B cell (primary cell): ENCODE measurements at regions of chr13 and their contacts with region 1.

Region 1: DNA sequence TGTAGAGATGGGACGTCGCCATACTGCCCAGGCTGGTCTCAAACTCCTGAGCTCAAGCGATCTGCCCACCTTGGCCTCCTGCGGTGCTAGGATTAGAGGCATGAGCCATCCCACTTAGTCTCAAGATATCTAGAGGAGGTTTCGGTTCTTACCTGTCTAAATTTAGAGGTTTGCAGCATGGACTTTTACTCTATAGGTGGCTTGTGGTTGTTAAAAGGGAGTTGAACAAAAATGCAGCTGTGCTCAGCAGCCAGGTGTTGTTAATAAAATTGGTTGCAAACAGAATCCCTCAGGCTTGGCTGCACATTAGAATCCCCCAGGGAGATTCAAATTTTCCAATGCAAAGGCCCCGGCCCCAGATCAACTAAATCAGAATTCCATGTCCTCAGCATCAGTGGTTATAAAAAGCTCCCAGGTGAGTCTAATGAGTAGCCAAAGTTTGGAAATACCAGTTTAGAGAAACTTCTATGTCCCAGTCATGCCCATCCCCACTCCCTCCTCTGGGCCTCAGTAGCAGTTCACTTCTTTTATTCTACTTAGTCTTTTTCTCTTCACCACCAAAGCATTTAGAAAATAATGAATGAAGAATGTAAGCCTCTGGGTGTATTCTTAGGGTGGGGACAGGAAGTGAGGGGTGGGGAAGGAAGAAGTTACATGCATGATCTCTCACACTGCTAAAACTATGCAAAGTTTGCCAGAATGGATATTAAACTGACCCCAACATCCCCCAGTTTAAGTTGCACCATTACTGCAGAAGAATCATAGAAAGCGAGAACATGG is 471.0 kb downstream of the COG6 start:
- DNase-seq: peak; percentile 50
- ATAC-seq: peak; percentile 32
- H3K4me3 ChIP-seq: peak overlapping the region in 3 of 5 experiments; percentile 16 to 53 (median 18)
- H3K4me3 Mint-ChIP-seq: peak overlapping the region; percentile 59
- H3K27ac ChIP-seq: peak overlapping the region; percentile 52 to 69
- H3K27ac Mint-ChIP-seq: peak overlapping the region; percentile 51
- H3K4me1 ChIP-seq: peaks cover 46 to 47% of the 10 kb centered on the region in 2 donors
- H3K4me1 Mint-ChIP-seq: peaks cover 51% of the 10 kb centered on the region
- H3K27me3 ChIP-seq: no peaks in the 10 kb centered on the region
- H3K27me3 Mint-ChIP-seq: no peaks in the 10 kb centered on the region
- CTCF ChIP-seq: no peak

Region 2: DNA sequence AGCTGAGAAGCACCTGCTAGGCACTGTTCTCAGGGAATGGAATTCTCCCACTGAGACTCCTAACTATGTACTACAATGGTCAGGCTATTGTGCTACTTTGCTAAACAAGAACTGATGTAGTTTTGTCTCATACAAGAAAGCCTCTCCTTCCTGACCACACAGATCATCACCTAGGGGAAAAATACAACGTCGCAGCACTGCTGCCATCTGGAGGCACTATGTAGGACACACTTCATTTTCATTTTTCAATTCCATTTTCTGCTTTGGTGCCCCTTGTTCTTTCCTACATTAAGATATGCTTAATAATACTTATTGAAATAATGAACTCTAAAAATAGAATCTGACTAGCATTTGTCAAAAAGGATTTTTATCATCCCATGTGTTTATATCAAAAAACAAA is 1109.7 kb before region 1 on chr13:
- CTCF ChIA-PET with region 1: no interaction called
- POLR2A ChIA-PET with region 1: no interaction called
- intact Hi-C with region 1: no loop called
- DNase-seq: peak; percentile 14
- ATAC-seq: no peak
- H3K4me3 ChIP-seq: no peak overlapping the region
- H3K4me3 Mint-ChIP-seq: no peak overlapping the region
- H3K27ac ChIP-seq: no peak overlapping the region
- H3K27ac Mint-ChIP-seq: no peak overlapping the region
- H3K4me1 ChIP-seq: no peaks in the 10 kb centered on the region
- H3K4me1 Mint-ChIP-seq: no peaks in the 10 kb centered on the region
- H3K27me3 ChIP-seq: no peaks in the 10 kb centered on the region
- H3K27me3 Mint-ChIP-seq: no peaks in the 10 kb centered on the region
- CTCF ChIP-seq: peak; percentile 49

Region 3: GRCh38 chr13:39132286-39133230 is 993.9 kb before region 1 on chr13:
- CTCF ChIA-PET with region 1: no interaction called
- POLR2A ChIA-PET with region 1: no interaction called
- intact Hi-C with region 1: no loop called
- DNase-seq: no peak
- ATAC-seq: no peak
- H3K4me3 ChIP-seq: no peak overlapping the region
- H3K4me3 Mint-ChIP-seq: no peak overlapping the region
- H3K27ac ChIP-seq: no peak overlapping the region
- H3K27ac Mint-ChIP-seq: no peak overlapping the region
- H3K4me1 ChIP-seq: no peaks in the 10 kb centered on the region
- H3K4me1 Mint-ChIP-seq: no peaks in the 10 kb centered on the region
- H3K27me3 ChIP-seq: peaks cover 0 to 3% (median 0%) of the 10 kb centered on the region in 4 experiments
- H3K27me3 Mint-ChIP-seq: peaks cover 15% of the 10 kb centered on the region
- CTCF ChIP-seq: no peak

Region 4: GRCh38 chr13:39385621-39386231 is 740.8 kb before region 1 on chr13:
- CTCF ChIA-PET with region 1: no interaction called
- POLR2A ChIA-PET with region 1: no interaction called
- intact Hi-C with region 1: no loop called
- DNase-seq: no peak
- ATAC-seq: no peak
- H3K4me3 ChIP-seq: no peak overlapping the region
- H3K4me3 Mint-ChIP-seq: no peak overlapping the region
- H3K27ac ChIP-seq: no peak overlapping the region
- H3K27ac Mint-ChIP-seq: no peak overlapping the region
- H3K4me1 ChIP-seq: no peaks in the 10 kb centered on the region
- H3K4me1 Mint-ChIP-seq: no peaks in the 10 kb centered on the region
- H3K27me3 ChIP-seq: no peaks in the 10 kb centered on the region
- H3K27me3 Mint-ChIP-seq: no peaks in the 10 kb centered on the region
- CTCF ChIP-seq: no peak

Region 5: GRCh38 chr13:40101708-40102359 is 24.7 kb before region 1 on chr13:
- CTCF ChIA-PET with region 1: interaction called, 4 read pairs
- POLR2A ChIA-PET with region 1: no interaction called
- intact Hi-C with region 1: loop called (anchors 1 kb)
- DNase-seq: peak; percentile 49
- ATAC-seq: peak; percentile 73
- H3K4me3 ChIP-seq: peak overlapping the region in 1 of 5 experiments; percentile 6
- H3K4me3 Mint-ChIP-seq: peak overlapping the region; percentile 61
- H3K27ac ChIP-seq: no peak overlapping the region
- H3K27ac Mint-ChIP-seq: peak overlapping the region; percentile 57
- H3K4me1 ChIP-seq: peaks cover 20 to 23% of the 10 kb centered on the region in 2 donors
- H3K4me1 Mint-ChIP-seq: peaks cover 22% of the 10 kb centered on the region
- H3K27me3 ChIP-seq: no peaks in the 10 kb centered on the region
- H3K27me3 Mint-ChIP-seq: no peaks in the 10 kb centered on the region
- CTCF ChIP-seq: no peak

Region 6: DNA sequence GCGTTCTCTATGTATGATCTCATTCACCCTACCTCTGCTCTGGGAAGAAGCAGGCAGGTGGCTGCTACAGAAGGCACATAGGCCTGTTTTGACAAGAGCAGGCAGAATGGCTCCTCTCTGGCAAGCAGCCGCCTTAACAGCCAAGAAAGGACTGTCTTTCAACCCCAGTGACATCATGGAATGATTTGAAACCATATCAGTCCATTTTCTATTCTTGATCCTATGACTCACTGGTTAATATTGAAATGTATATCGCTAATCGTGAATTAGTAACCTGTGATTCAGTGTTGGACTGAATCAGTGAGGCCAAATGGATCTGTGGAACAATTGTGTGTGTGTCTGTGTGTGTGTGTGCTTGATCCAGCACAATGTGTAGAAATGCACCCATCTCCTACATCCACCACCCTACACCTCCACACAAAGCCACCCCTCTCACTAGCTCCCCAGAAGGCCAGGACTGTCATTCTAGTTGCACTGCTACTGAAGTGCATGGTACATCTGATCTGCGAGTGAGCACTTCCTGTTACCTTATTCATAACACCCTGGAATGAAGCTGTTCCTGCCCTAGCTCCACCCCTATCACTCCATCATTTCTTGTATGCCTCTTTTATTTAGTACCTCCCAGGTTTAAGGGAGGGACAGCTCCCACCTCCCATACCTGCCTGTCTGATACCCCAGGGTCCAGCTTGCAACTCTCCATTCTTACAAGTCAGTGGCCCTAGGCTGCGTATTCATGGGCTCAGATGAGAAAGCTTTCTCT is 79.9 kb after region 1 on chr13:
- CTCF ChIA-PET with region 1: no interaction called
- POLR2A ChIA-PET with region 1: interaction called, 13 read pairs
- intact Hi-C with region 1: no loop called
- DNase-seq: peak; percentile 78
- ATAC-seq: peak; percentile 68
- H3K4me3 ChIP-seq: peak overlapping the region in 2 of 5 experiments; percentile 22 to 36
- H3K4me3 Mint-ChIP-seq: peak overlapping the region; percentile 80
- H3K27ac ChIP-seq: peak overlapping the region; percentile 88 to 90
- H3K27ac Mint-ChIP-seq: peak overlapping the region; percentile 99
- H3K4me1 ChIP-seq: peaks cover 66 to 67% of the 10 kb centered on the region in 2 donors
- H3K4me1 Mint-ChIP-seq: peaks cover 68% of the 10 kb centered on the region
- H3K27me3 ChIP-seq: no peaks in the 10 kb centered on the region
- H3K27me3 Mint-ChIP-seq: no peaks in the 10 kb centered on the region
- CTCF ChIP-seq: no peak

Region 7: GRCh38 chr13:40470660-40471059 is 344.2 kb after region 1 on chr13:
- CTCF ChIA-PET with region 1: no interaction called
- POLR2A ChIA-PET with region 1: no interaction called
- intact Hi-C with region 1: no loop called
- DNase-seq: no peak
- ATAC-seq: no peak
- H3K4me3 ChIP-seq: no peak overlapping the region
- H3K4me3 Mint-ChIP-seq: no peak overlapping the region
- H3K27ac ChIP-seq: no peak overlapping the region
- H3K27ac Mint-ChIP-seq: no peak overlapping the region
- H3K4me1 ChIP-seq: peaks cover 5 to 7% of the 10 kb centered on the region in 2 donors
- H3K4me1 Mint-ChIP-seq: peaks cover 12% of the 10 kb centered on the region
- H3K27me3 ChIP-seq: no peaks in the 10 kb centered on the region
- H3K27me3 Mint-ChIP-seq: no peaks in the 10 kb centered on the region
- CTCF ChIP-seq: no peak

Region 8: DNA sequence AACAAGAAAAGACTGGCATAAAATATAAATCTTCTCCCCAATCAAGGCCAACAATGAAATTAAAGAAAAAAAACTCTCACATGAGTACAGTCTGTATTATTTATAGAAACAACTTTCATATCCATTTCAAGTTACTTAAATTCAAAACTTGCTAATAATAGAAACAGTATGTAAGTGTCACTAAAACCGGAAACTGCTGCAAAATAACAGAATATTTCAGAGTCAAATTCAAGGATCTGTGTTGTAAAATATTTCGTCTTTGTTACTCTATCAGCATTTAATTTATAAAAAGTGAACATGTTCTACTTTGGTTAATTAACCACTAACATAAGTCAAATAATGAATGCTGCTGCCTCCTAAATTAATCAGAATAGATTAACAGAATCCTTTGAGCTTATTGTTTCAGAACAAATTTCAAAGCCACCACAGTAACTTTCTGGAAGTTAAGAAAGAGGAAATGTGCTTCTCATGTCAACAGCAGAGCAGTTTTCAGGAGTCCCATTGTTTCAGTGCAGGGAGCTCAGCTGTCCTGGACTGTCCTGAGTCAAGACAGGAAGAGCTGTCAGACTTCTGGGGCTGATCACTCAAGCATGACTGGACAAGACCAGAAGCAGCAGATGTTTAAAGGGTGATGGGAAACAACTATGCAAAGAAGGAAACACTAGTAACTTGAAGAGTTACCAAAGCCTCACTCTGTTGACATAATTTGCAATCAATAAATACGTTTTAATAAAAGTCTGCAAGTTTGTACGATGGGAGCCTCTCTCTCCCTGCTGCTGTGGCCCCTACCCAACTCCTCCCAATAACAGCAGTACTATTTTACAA is 463.0 kb after region 1 on chr13:
- CTCF ChIA-PET with region 1: no interaction called
- POLR2A ChIA-PET with region 1: no interaction called
- intact Hi-C with region 1: loop called (anchors 5 kb)
- DNase-seq: peak; percentile 83
- ATAC-seq: peak; percentile 91
- H3K4me3 ChIP-seq: peak overlapping the region; percentile 12 to 58 (median 24)
- H3K4me3 Mint-ChIP-seq: peak overlapping the region; percentile 65
- H3K27ac ChIP-seq: peak overlapping the region; percentile 85 to 95
- H3K27ac Mint-ChIP-seq: peak overlapping the region; percentile 89
- H3K4me1 ChIP-seq: peaks cover 91 to 98% of the 10 kb centered on the region in 2 donors
- H3K4me1 Mint-ChIP-seq: peaks cover 94% of the 10 kb centered on the region
- H3K27me3 ChIP-seq: no peaks in the 10 kb centered on the region
- H3K27me3 Mint-ChIP-seq: no peaks in the 10 kb centered on the region
- CTCF ChIP-seq: no peak

Region 9: DNA sequence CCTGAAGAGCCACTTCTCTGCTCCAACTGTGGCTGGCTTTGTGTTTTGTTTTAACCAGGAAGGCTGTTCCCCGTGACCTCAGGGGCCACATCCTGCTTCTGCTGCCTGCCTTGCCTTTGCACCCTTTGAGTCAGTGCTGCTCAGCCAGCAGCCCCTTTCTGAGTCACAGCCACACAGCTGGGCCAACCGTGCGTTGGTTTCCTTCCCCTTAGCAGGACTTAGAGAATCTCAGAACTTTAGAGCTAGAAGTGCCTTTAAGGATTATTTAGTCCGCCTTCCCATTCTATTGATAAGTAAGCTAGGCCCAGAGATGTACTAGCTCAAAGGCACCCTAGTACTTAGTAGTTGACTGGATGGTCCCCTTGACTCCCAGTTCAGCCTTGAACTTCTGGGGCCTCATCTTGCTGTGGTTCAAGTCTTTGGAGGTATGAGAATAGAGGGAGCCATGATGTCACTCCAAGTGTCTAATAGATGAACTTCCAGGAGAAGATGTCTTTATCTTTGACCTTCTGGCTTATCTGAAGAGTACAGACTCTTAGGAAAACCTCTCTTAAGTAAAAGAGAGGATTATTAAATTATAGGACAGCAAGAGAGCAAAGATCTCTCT is 1338.8 kb after region 1 on chr13:
- CTCF ChIA-PET with region 1: no interaction called
- POLR2A ChIA-PET with region 1: interaction called, 10 read pairs
- intact Hi-C with region 1: no loop called
- DNase-seq: peak; percentile 74
- ATAC-seq: peak; percentile 82
- H3K4me3 ChIP-seq: no peak overlapping the region
- H3K4me3 Mint-ChIP-seq: peak overlapping the region; percentile 62
- H3K27ac ChIP-seq: peak overlapping the region; percentile 77 to 80
- H3K27ac Mint-ChIP-seq: peak overlapping the region; percentile 80
- H3K4me1 ChIP-seq: peaks cover 46% of the 10 kb centered on the region in 2 donors
- H3K4me1 Mint-ChIP-seq: peaks cover 50% of the 10 kb centered on the region
- H3K27me3 ChIP-seq: peaks cover 0 to 3% (median 0%) of the 10 kb centered on the region in 4 experiments
- H3K27me3 Mint-ChIP-seq: peaks cover 3% of the 10 kb centered on the region
- CTCF ChIP-seq: no peak